ENCODE measurements at regions of chr4 and their contacts with region 1.

Region 1: DNA sequence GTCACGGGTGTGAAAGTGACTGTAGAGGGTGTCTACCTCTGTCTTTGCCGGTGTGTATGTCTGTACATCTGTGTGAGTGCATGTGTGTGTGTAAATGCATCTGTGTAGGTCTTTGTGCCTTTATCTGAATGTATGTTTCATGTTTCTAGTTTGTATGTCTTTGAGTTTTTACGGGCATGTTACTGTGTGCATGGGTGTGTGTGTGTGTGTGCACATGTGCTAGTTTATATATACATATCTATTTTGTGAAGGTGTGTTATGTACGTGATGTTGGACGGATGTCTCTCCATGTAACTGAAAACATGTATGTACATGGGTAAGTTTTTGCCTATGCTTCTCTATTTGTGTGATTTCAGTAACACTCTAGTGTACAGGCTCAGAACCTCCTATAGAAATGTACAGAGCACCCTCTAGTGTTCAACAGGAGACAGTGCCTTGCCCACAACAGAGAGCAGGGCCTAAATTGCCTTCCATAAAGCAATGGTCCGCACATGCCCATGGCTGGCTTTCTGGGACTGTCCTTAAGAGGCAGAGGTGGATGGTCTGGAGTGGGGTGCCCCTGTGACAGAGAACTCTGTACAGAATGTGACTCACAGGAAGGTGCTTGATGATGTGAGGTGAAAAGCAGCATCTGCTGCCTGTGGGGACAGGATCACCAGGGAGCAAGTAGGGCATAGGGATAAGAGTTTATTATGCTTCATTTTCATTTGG is 343.5 kb downstream of the RAPGEF2 start:
- DNase-seq: peak; percentile 75
- H3K4me3 Mint-ChIP-seq: no peak overlapping the region
- H3K27ac Mint-ChIP-seq: peak overlapping the region; percentile 23
- H3K4me1 Mint-ChIP-seq: peaks cover 7% of the 10 kb centered on the region
- H3K27me3 Mint-ChIP-seq: no peaks in the 10 kb centered on the region
- CTCF ChIP-seq: peak; percentile 88

Region 2: DNA sequence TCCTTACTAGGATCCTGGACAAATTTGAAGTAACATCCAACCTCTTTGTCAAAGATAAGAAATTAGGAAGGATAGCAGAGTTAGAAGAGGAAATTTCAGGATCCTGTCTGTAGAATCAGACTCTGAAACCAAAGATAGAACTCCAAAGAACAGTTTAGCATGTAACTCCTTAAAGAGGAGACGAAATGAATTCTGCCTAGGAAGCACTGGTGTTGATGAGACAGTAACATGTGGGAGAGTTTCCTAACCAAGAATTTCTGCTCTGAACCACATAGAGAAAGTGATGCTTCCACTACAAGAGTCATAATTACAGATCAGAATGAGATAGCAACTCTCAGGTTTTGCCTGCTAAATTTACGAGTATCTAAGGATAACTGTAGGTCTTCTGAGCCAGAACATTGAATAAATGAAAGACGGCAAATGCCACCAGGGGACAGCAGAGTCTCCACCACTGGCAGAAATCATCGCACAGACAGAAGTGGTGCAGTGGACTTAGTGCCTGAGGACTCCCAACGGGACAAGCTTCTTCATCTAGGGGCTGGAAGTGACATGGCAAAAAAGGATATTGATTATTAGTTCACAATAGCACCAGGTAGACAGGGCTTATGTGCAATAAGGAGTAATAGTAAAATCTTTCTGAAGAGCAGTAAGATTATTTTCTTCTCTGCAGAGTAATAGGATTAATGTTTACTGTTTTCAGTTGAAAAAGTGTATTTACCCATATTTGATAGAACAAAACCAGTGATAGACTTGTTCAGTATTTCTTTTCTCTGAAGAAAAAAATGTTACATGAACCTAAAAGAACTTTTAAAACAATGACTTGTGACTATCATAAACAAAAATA is 716.5 kb before region 1 on chr4:
- CTCF ChIA-PET with region 1: interaction called, 4 read pairs
- POLR2A ChIA-PET with region 1: no interaction called
- intact Hi-C with region 1: loop called (anchors 1 kb)
- DNase-seq: peak; percentile 69
- H3K4me3 Mint-ChIP-seq: no peak overlapping the region
- H3K27ac Mint-ChIP-seq: no peak overlapping the region
- H3K4me1 Mint-ChIP-seq: no peaks in the 10 kb centered on the region
- H3K27me3 Mint-ChIP-seq: peaks cover 55% of the 10 kb centered on the region
- CTCF ChIP-seq: peak; percentile 75

Region 3: DNA sequence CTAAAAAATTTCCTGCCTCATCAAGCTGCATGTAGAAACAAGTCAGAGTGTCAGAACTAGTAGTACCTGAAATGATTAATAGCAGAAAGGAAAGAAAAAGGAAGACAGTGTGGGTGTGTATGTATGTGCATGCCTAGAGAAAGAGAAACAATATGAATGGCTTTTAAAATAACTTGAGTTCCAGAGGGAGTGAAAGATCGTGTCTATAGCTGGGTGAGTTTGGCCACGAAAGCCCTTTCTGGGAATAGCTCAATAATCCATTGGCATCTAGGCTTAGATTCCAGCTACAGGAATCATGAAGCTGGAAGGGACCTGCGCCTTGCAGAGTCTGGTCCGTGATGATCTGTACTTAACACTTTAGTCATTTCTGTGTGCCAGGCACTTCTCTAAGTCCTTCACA is 147.9 kb before region 1 on chr4:
- CTCF ChIA-PET with region 1: interaction called, 3 read pairs
- POLR2A ChIA-PET with region 1: no interaction called
- intact Hi-C with region 1: loop called (anchors 10 kb)
- DNase-seq: peak; percentile 67
- H3K4me3 Mint-ChIP-seq: peak overlapping the region; percentile 67
- H3K27ac Mint-ChIP-seq: peak overlapping the region; percentile 72
- H3K4me1 Mint-ChIP-seq: peaks cover 33% of the 10 kb centered on the region
- H3K27me3 Mint-ChIP-seq: no peaks in the 10 kb centered on the region
- CTCF ChIP-seq: no peak

Region 4: GRCh38 chr4:159360549-159360948 is 85.9 kb before region 1 on chr4:
- CTCF ChIA-PET with region 1: interaction called, 4 read pairs
- POLR2A ChIA-PET with region 1: interaction called, 5 read pairs
- intact Hi-C with region 1: loop called (anchors 10 kb)
- DNase-seq: peak; percentile 47
- H3K4me3 Mint-ChIP-seq: no peak overlapping the region
- H3K27ac Mint-ChIP-seq: peak overlapping the region; percentile 46
- H3K4me1 Mint-ChIP-seq: peaks cover 5% of the 10 kb centered on the region
- H3K27me3 Mint-ChIP-seq: no peaks in the 10 kb centered on the region
- CTCF ChIP-seq: no peak

Region 5: GRCh38 chr4:159735281-159736207 is 289.1 kb after region 1 on chr4:
- CTCF ChIA-PET with region 1: no interaction called
- POLR2A ChIA-PET with region 1: no interaction called
- intact Hi-C with region 1: no loop called
- DNase-seq: no peak
- H3K4me3 Mint-ChIP-seq: no peak overlapping the region
- H3K27ac Mint-ChIP-seq: no peak overlapping the region
- H3K4me1 Mint-ChIP-seq: no peaks in the 10 kb centered on the region
- H3K27me3 Mint-ChIP-seq: no peaks in the 10 kb centered on the region
- CTCF ChIP-seq: no peak